ENCODE measurements at regions of chr17 and their contacts with region 1.

Region 1: GRCh38 chr17:49227436-49228261 is 2.9 kb downstream of the PHOSPHO1 start:
- DNase-seq: peak; percentile 66
- ATAC-seq: peak; percentile 71
- H3K4me3 ChIP-seq: no peak overlapping the region
- H3K27ac ChIP-seq: no peak overlapping the region
- H3K4me1 ChIP-seq: peaks cover 2 to 39% of the 10 kb centered on the region in 2 experiments; a peak in 3 of 4 replicates
- H3K27me3 ChIP-seq: no peaks in the 10 kb centered on the region
- CTCF ChIP-seq: peak; percentile 94 to 99 (median 97)
- POLR2A ChIP-seq: no peak
- RAD21 ChIP-seq: peak; percentile 89

Region 2: DNA sequence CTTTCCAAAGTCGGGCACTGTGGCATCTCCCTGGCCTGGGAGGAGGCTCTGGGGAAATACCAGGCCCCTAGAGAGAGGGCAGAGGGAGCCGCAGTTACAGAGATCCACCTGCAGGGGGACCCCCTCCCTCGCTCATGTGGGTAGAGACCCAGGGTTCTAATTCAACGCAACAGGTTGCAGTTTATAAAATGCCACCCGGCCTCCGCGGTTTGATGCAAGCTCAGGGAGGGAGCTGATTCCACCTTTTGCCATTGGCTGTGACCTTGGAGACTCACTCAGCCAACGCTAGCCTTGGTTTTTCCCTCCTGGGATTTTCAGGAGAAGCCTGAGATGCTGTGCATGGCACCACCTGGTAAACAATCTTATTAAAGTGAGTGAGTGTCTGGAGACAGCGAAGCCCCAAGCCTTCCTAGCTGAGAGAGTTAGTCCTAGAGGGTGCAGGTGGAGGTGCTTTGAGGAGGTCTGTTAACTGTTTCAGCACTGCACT is 422.7 kb before region 1 on chr17:
- CTCF ChIA-PET with region 1: interaction called, 5 read pairs
- POLR2A ChIA-PET with region 1: no interaction called
- RAD21 ChIA-PET with region 1: no interaction called
- intact Hi-C with region 1: loop called (anchors 2 kb)
- DNase-seq: peak; percentile 77
- ATAC-seq: peak; percentile 100
- H3K4me3 ChIP-seq: peak overlapping the region in 1 of 2 experiments; percentile 4; a peak in 2 of 4 replicates
- H3K27ac ChIP-seq: no peak overlapping the region
- H3K4me1 ChIP-seq: peaks cover 4 to 11% of the 10 kb centered on the region in 2 experiments; a peak in 3 of 4 replicates
- H3K27me3 ChIP-seq: no peaks in the 10 kb centered on the region
- CTCF ChIP-seq: peak; percentile 97 to 100 (median 100)
- POLR2A ChIP-seq: no peak
- RAD21 ChIP-seq: peak; percentile 99

Region 3: GRCh38 chr17:48954300-48954755 is 273.3 kb before region 1 on chr17:
- CTCF ChIA-PET with region 1: no interaction called
- POLR2A ChIA-PET with region 1: no interaction called
- RAD21 ChIA-PET with region 1: no interaction called
- intact Hi-C with region 1: loop called (anchors 10 kb)
- DNase-seq: peak; percentile 69
- ATAC-seq: peak; percentile 99
- H3K4me3 ChIP-seq: no peak overlapping the region
- H3K27ac ChIP-seq: no peak overlapping the region
- H3K4me1 ChIP-seq: peaks cover 0 to 8% of the 10 kb centered on the region in 2 experiments; a peak in 2 of 4 replicates
- H3K27me3 ChIP-seq: no peaks in the 10 kb centered on the region
- CTCF ChIP-seq: peak; percentile 89 to 98 (median 98)
- POLR2A ChIP-seq: no peak
- RAD21 ChIP-seq: peak; percentile 100

Region 4: DNA sequence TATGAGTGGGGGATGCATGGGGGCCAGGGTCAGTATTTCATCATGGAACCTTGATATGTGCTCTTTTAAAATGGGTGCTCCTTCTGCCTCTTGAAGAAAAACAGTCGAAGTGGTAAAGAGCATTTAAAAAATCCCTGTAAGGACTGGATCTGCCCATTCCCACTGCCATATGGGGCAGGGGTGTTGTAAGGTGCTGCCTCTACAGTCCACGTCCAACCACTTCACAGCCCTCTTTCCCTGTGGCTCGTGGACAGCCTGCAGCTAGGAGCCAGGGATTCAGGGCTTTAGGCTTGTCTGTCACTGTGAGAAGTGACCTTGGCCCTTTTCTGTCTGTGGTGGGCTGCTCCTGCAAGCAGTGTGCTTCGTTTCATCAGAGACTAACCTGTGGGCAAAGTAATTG is 186.1 kb before region 1 on chr17:
- CTCF ChIA-PET with region 1: no interaction called
- POLR2A ChIA-PET with region 1: no interaction called
- RAD21 ChIA-PET with region 1: no interaction called
- intact Hi-C with region 1: no loop called
- DNase-seq: no peak
- ATAC-seq: no peak
- H3K4me3 ChIP-seq: no peak overlapping the region
- H3K27ac ChIP-seq: no peak overlapping the region
- H3K4me1 ChIP-seq: peaks cover 0 to 6% of the 10 kb centered on the region in 2 experiments; a peak in 1 of 4 replicates
- H3K27me3 ChIP-seq: no peaks in the 10 kb centered on the region
- CTCF ChIP-seq: no peak
- POLR2A ChIP-seq: no peak
- RAD21 ChIP-seq: no peak

Region 5: GRCh38 chr17:49180303-49180702 is 47.3 kb before region 1 on chr17:
- CTCF ChIA-PET with region 1: interaction called, 12 read pairs
- POLR2A ChIA-PET with region 1: no interaction called
- RAD21 ChIA-PET with region 1: no interaction called
- intact Hi-C with region 1: loop called (anchors 1 kb)
- DNase-seq: peak; percentile 74
- ATAC-seq: peak; percentile 96
- H3K4me3 ChIP-seq: no peak overlapping the region
- H3K27ac ChIP-seq: no peak overlapping the region
- H3K4me1 ChIP-seq: peaks cover 0 to 6% of the 10 kb centered on the region in 2 experiments; a peak in 1 of 4 replicates
- H3K27me3 ChIP-seq: no peaks in the 10 kb centered on the region
- CTCF ChIP-seq: peak; percentile 87 to 99 (median 97)
- POLR2A ChIP-seq: no peak
- RAD21 ChIP-seq: peak; percentile 86

Region 6: GRCh38 chr17:49191917-49192741 is 35.5 kb before region 1 on chr17:
- CTCF ChIA-PET with region 1: interaction called, 9 read pairs
- POLR2A ChIA-PET with region 1: no interaction called
- RAD21 ChIA-PET with region 1: no interaction called
- intact Hi-C with region 1: loop called (anchors 5 kb)
- DNase-seq: peak; percentile 89
- ATAC-seq: peak; percentile 75
- H3K4me3 ChIP-seq: peak overlapping the region; percentile 54 to 61
- H3K27ac ChIP-seq: peak overlapping the region; percentile 85
- H3K4me1 ChIP-seq: peaks cover 13 to 44% of the 10 kb centered on the region in 2 experiments; a peak in 3 of 4 replicates
- H3K27me3 ChIP-seq: no peaks in the 10 kb centered on the region
- CTCF ChIP-seq: peak; percentile 24 to 32 (median 29); a peak in 5 of 6 replicates
- POLR2A ChIP-seq: no peak
- RAD21 ChIP-seq: no peak; the same call in 1 of the 2 replicates

Region 7: DNA sequence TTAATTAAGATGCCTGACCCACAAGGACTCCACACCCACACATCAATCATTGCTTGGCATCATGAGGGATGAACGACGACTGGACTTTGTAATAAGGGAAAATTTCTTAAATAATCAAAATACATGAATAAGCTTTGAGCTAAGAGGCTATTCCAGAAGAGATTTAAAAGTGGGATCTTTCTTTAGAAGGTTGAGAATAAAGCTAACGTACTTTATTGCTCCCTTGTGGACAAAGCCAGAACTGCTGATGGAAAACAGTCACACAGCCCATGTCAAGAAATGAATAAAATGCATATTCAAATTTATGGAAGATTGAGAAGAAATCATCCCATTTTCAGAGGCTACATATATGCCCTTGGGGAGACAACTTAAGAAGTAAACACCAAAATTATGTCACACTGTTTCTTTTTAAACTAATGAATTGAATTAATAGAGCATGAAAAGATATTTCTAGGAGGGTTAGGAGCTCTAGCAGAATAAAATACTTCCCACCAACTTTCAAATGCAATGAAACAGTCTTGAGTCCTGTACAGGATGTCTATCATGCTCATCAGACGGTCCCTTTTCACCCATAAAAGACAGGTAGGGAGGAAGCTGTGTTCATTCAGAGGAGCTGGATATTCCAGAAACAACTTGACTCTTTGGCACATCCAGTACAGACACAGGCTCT is 63.2 kb after region 1 on chr17:
- CTCF ChIA-PET with region 1: interaction called, 25 read pairs
- POLR2A ChIA-PET with region 1: no interaction called
- RAD21 ChIA-PET with region 1: interaction called in 1 of 2 experiments, 9 read pairs
- intact Hi-C with region 1: loop called (anchors 5 kb)
- DNase-seq: peak; percentile 8
- ATAC-seq: peak; percentile 80
- H3K4me3 ChIP-seq: no peak overlapping the region
- H3K27ac ChIP-seq: no peak overlapping the region
- H3K4me1 ChIP-seq: no peaks in the 10 kb centered on the region
- H3K27me3 ChIP-seq: no peaks in the 10 kb centered on the region
- CTCF ChIP-seq: peak; percentile 65 to 88 (median 83); a peak in 5 of 6 replicates
- POLR2A ChIP-seq: no peak
- RAD21 ChIP-seq: peak; percentile 75

Region 8: GRCh38 chr17:49399995-49400394 is 172.3 kb after region 1 on chr17:
- CTCF ChIA-PET with region 1: no interaction called
- POLR2A ChIA-PET with region 1: no interaction called
- RAD21 ChIA-PET with region 1: no interaction called
- intact Hi-C with region 1: loop called (anchors 5 kb)
- DNase-seq: no peak
- ATAC-seq: no peak
- H3K4me3 ChIP-seq: no peak overlapping the region
- H3K27ac ChIP-seq: no peak overlapping the region
- H3K4me1 ChIP-seq: no peaks in the 10 kb centered on the region
- H3K27me3 ChIP-seq: no peaks in the 10 kb centered on the region
- CTCF ChIP-seq: no peak
- POLR2A ChIP-seq: no peak
- RAD21 ChIP-seq: no peak

Measured in HCT116 (cell line).